Activated T-helper 1 cell treated with anti-CD3 and anti-CD28 coated beads, Interleukin-12 subunit alpha, Interleukin-12 subunit beta, Interleukin-2, Interleukin-4 antibody, amounts not matched to agents 30 ng/mL and 10 ng/mL and 1 ng/mL, durations not matched to agents 14 hours and 24 hours and 36 hours (primary cell): ENCODE measurements at regions of chr20 and their contacts with region 1.

Region 1: GRCh38 chr20:36199345-36200257 is 36.7 kb upstream of the AAR2 start:
- DNase-seq: peak; percentile 49
- H3K4me3 Mint-ChIP-seq: no peak overlapping the region
- H3K27ac Mint-ChIP-seq: no peak overlapping the region
- H3K4me1 Mint-ChIP-seq: peaks cover 5% of the 10 kb centered on the region
- H3K27me3 Mint-ChIP-seq: peaks cover 4% of the 10 kb centered on the region

Region 2: GRCh38 chr20:35673884-35674283 is 525.7 kb before region 1 on chr20:
- intact Hi-C with region 1: no loop called
- DNase-seq: no peak
- H3K4me3 Mint-ChIP-seq: no peak overlapping the region
- H3K27ac Mint-ChIP-seq: no peak overlapping the region
- H3K4me1 Mint-ChIP-seq: no peaks in the 10 kb centered on the region
- H3K27me3 Mint-ChIP-seq: no peaks in the 10 kb centered on the region

Region 3: DNA sequence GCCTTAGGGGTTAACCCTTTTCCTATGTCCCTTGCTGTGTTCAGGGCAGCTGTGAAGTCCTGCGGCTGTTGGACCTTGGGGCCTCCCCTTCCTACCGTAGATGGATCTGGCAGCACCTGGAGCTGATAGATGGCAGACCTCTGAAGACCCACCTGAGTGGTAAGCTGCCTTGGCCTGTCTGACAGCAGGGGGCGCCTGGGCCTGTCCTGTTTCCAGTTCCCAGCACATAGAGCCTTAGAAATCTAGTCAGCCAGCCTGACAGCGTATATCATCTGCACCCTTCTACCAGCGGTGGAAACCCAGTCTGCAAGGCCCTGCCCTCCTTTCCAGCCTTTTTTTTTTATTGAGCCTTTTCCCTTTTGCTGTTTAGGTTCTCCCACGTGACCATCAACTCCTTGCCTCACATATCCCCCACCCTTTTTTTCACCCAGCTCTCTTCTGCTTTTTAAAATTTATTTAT is 204.6 kb before region 1 on chr20:
- intact Hi-C with region 1: loop called (anchors 1 kb)
- DNase-seq: peak; percentile 43
- H3K4me3 Mint-ChIP-seq: no peak overlapping the region
- H3K27ac Mint-ChIP-seq: no peak overlapping the region
- H3K4me1 Mint-ChIP-seq: no peaks in the 10 kb centered on the region
- H3K27me3 Mint-ChIP-seq: peaks cover 12% of the 10 kb centered on the region

Region 4: DNA sequence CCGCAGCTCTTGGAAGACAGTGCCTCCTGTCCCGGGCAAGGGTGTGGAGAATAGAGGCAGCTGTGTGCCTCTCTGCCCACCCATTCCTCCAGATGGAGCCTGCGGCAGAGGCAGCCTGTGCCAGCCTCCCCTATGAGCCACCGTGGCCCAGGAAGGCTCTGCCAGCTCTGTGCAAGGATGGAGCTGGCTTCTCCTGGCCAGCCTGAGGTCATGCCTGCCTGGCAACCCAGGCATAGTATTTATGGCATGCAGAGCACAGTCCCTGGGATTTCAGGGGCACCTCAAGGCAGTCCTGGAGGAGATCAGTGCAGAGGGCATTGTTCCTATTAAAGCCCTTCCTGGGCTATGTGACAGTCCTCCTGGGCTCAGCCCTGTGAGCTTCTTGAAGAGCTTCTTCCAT is 43.6 kb before region 1 on chr20:
- intact Hi-C with region 1: loop called (anchors 1 kb)
- DNase-seq: no peak
- H3K4me3 Mint-ChIP-seq: no peak overlapping the region
- H3K27ac Mint-ChIP-seq: no peak overlapping the region
- H3K4me1 Mint-ChIP-seq: no peaks in the 10 kb centered on the region
- H3K27me3 Mint-ChIP-seq: peaks cover 29% of the 10 kb centered on the region

Region 5: DNA sequence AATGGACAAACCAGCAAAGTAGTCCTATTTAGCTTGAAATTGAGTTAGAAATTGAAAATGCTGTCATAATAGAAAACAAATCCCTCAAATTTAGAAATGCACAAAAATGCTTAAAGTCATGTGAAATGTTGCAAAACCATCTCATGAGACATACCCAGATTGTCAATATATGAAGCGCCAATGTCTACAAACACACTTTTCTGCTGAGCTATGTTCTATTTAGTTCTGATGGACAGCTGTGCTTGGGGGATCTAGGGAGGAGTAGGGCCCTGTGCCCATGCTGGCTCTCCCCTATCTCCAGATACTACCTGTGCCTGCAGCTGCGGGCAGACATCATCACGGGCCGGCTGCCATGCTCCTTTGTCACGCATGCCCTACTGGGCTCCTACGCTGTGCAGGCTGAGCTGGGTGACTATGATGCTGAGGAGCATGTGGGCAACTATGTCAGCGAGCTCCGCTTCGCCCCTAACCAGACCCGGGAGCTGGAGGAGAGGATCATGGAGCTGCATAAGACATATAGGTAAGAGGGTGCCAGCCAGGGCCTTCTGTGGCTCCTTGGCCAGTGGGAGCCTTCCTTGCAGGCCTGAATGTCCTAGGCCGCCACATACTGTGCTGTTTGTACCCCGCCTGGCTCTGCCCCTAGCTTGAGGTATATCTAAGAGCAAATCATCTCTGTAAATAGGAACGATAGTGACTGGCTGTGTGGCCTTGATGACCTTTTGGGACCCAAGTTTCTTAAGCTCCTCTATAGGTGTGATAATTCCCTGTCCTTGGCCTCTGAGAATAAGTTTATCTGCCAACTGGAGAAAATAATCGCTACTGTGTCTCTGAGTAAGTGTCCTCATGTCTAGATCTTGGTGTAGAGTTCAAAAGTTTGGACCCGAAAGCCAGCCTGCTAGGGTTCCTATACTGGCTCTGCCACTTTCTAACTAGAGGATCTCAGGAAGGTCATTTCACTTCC is 14.5 kb before region 1 on chr20:
- intact Hi-C with region 1: no loop called
- DNase-seq: no peak
- H3K4me3 Mint-ChIP-seq: no peak overlapping the region
- H3K27ac Mint-ChIP-seq: no peak overlapping the region
- H3K4me1 Mint-ChIP-seq: no peaks in the 10 kb centered on the region
- H3K27me3 Mint-ChIP-seq: no peaks in the 10 kb centered on the region